Psoas muscle (tissue), 8 donors: ENCODE measurements at regions of chr1 and their contacts with region 1.

Region 1: GRCh38 chr1:9292361-9293240 is at the start of gene SPSB1:
- DNase-seq: peak; percentile 77 to 86
- ATAC-seq: peak; percentile 38 to 64 (median 57)
- H3K4me3 ChIP-seq: peak within 1 kb of the TSS; percentile 93
- H3K27ac ChIP-seq: peak within 1 kb of the TSS; percentile 86
- H3K4me1 ChIP-seq: peaks cover 41% of the 10 kb centered on the region
- H3K27me3 ChIP-seq: no peaks in the 10 kb centered on the region
- CTCF ChIP-seq: no peak
- total RNA-seq, gene SPSB1: 12.0 to 60.7 (median 42.1) TPM

Region 2: GRCh38 chr1:9249534-9250410 is 42.8 kb before region 1 on chr1:
- intact Hi-C with region 1: loop called in 1 of 2 experiments (anchors 5 kb)
- DNase-seq: peak; percentile 57 to 72
- ATAC-seq: peak; percentile 34 to 37 (median 36)
- H3K4me3 ChIP-seq: peak overlapping the region; percentile 41
- H3K27ac ChIP-seq: peak overlapping the region; percentile 90
- H3K4me1 ChIP-seq: peaks cover 89% of the 10 kb centered on the region
- H3K27me3 ChIP-seq: no peaks in the 10 kb centered on the region
- CTCF ChIP-seq: peak; percentile 46

Region 3: DNA sequence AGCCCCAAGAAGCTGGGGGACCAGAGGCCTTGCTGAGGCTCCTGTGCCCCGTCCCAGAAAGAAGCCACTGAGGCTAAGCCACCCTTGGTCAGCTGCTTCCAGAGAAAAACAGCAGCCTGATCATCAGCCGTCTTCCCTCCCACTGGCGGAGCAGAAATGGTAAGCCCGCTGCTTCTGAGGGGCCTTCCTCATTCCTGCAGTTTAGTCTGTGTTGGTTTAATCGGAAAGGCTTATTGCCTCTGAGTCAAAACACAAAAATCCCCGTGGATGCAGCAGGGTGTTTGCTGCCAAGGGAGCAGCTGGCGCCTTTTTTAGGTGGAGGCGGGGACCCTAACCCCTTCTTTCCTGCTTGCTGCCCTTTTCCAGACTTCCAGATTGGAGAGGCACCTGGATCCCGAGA is 34.0 kb after region 1 on chr1:
- intact Hi-C with region 1: no loop called
- DNase-seq: no peak
- ATAC-seq: no peak
- H3K4me3 ChIP-seq: no peak overlapping the region
- H3K27ac ChIP-seq: no peak overlapping the region
- H3K4me1 ChIP-seq: peaks cover 22% of the 10 kb centered on the region
- H3K27me3 ChIP-seq: no peaks in the 10 kb centered on the region
- CTCF ChIP-seq: no peak

Region 4: GRCh38 chr1:9573723-9574122 is 281.1 kb after region 1 on chr1:
- intact Hi-C with region 1: loop called in 1 of 2 experiments (anchors 5 kb)
- DNase-seq: no peak
- ATAC-seq: peak in 3 of 4 donors; percentile 45 to 61 (median 61)
- H3K4me3 ChIP-seq: no peak overlapping the region
- H3K27ac ChIP-seq: no peak overlapping the region
- H3K4me1 ChIP-seq: peaks cover 15% of the 10 kb centered on the region
- H3K27me3 ChIP-seq: no peaks in the 10 kb centered on the region
- CTCF ChIP-seq: peak; percentile 36